Activated naive CD8-positive, alpha-beta T cell treated with anti-CD3 and anti-CD28 coated beads, Interleukin-2, amount 10 ng/mL, durations not matched to agents 7 days and 5 days (primary cell): ENCODE measurements at regions of chr16 and their contacts with region 1.

Region 1: DNA sequence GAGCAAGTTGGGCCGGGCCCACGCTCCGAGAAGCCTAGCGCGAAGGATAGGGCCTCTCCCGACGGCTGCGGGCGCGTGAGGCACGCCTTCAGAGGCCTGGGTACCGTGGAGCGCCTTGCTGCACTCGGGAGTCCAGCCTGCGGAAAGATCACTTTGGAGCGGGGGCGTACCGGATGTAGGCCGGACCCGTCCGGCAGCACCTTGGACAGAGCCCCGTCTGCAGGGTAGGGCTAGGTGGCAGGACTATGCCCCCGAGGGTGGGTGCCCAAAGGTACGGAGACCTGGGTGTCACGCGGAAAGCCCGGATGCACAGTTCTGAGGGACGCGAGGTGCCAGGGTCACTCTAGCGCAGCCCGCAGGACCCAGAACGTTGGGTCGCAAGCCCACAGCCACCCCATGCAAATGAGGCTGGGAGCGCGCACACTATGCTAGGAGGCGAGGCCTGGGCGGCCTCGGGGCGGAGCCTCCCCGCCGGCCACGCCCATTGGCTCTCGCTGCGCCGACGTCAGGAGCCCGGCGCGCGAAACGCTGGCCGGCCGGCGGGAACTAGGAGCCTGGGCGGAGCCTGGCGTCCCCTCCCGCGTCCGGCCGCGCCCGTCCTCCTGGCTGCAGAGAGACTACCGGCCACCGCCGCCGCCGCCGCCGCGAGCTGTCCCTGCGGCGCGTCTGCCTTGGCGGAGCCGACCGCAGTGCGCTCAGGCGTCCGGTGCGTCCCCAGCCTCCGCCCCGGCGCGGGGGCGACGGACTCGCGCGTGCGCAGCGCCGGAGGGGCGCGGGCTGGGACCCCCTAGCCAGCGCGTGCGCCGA is at the start of gene PAQR4:
- DNase-seq: peak; percentile 96
- ATAC-seq: peak; percentile 65
- H3K4me3 Mint-ChIP-seq: peak within 1 kb of the TSS; percentile 82
- H3K27ac Mint-ChIP-seq: peak within 1 kb of the TSS; percentile 61
- H3K4me1 Mint-ChIP-seq: peaks cover 27% of the 10 kb centered on the region
- H3K27me3 Mint-ChIP-seq: peaks cover 18% of the 10 kb centered on the region
- total RNA-seq, gene PAQR4: 40.7 to 42.4 TPM

Region 2: GRCh38 chr16:2980227-2981086 is 11.5 kb after region 1 on chr16 and contains the start of gene PKMYT1:
- POLR2A ChIA-PET with region 1: interaction called, 46 read pairs
- DNase-seq: peak; percentile 99
- ATAC-seq: peak; percentile 91
- H3K4me3 Mint-ChIP-seq: peak within 1 kb of the TSS; percentile 92
- H3K27ac Mint-ChIP-seq: peak within 1 kb of the TSS; percentile 93
- H3K4me1 Mint-ChIP-seq: peaks cover 18% of the 10 kb centered on the region
- H3K27me3 Mint-ChIP-seq: peaks cover 6% of the 10 kb centered on the region
- total RNA-seq, gene PKMYT1: 106 to 116 TPM